PC-3 (cell line): ENCODE measurements at regions of chr2 and their contacts with region 1.

Region 1: DNA sequence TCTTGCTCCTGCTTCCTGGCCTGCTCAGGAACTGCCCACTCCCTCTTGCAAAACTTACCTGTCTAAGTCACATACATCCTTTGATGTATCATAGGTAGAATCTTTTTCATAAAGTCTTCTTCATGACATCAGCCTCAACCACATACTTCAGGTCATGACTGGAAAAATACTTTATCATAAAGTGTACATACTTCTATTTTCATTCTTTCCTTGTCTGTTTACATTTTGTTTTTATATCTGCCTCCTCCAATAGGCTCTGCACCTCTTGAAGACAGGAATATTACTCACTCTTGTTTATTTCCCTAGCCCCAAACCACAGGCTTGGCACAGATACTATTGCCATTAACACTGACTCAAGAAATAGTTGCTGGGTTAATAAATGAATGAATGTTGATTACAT is 43.6 kb upstream of the ZNF804A start:
- DNase-seq: peak; percentile 93
- ATAC-seq: peak; percentile 94
- H3K4me3 ChIP-seq: no peak overlapping the region
- H3K27ac ChIP-seq: peak overlapping the region; percentile 91
- H3K4me1 ChIP-seq: peaks cover 26% of the 10 kb centered on the region
- H3K27me3 ChIP-seq: no peaks in the 10 kb centered on the region
- CTCF ChIP-seq: no peak

Region 2: GRCh38 chr2:183812091-183812490 is 742.6 kb before region 1 on chr2:
- CTCF ChIA-PET with region 1: no interaction called
- POLR2A ChIA-PET with region 1: no interaction called
- intact Hi-C with region 1: no loop called
- DNase-seq: peak; percentile 62
- ATAC-seq: peak; percentile 88
- H3K4me3 ChIP-seq: no peak overlapping the region
- H3K27ac ChIP-seq: no peak overlapping the region
- H3K4me1 ChIP-seq: peaks cover 42% of the 10 kb centered on the region
- H3K27me3 ChIP-seq: no peaks in the 10 kb centered on the region
- CTCF ChIP-seq: no peak

Region 3: GRCh38 chr2:184351126-184351525 is 203.6 kb before region 1 on chr2:
- CTCF ChIA-PET with region 1: no interaction called
- POLR2A ChIA-PET with region 1: no interaction called
- intact Hi-C with region 1: no loop called
- DNase-seq: no peak
- ATAC-seq: no peak
- H3K4me3 ChIP-seq: no peak overlapping the region
- H3K27ac ChIP-seq: no peak overlapping the region
- H3K4me1 ChIP-seq: peaks cover 7% of the 10 kb centered on the region; the same call in 1 of the 2 replicates
- H3K27me3 ChIP-seq: no peaks in the 10 kb centered on the region
- CTCF ChIP-seq: no peak

Region 4: GRCh38 chr2:184481865-184482264 is 72.9 kb before region 1 on chr2:
- CTCF ChIA-PET with region 1: no interaction called
- POLR2A ChIA-PET with region 1: no interaction called
- intact Hi-C with region 1: loop called (anchors 1 kb)
- DNase-seq: peak; percentile 4
- ATAC-seq: peak; percentile 68
- H3K4me3 ChIP-seq: no peak overlapping the region
- H3K27ac ChIP-seq: peak overlapping the region; percentile 53
- H3K4me1 ChIP-seq: peaks cover 6% of the 10 kb centered on the region; the same call in 1 of the 2 replicates
- H3K27me3 ChIP-seq: no peaks in the 10 kb centered on the region
- CTCF ChIP-seq: no peak